IMR-90 (cell line): ENCODE measurements at regions of chr4 and their contacts with region 1.

Region 1: DNA sequence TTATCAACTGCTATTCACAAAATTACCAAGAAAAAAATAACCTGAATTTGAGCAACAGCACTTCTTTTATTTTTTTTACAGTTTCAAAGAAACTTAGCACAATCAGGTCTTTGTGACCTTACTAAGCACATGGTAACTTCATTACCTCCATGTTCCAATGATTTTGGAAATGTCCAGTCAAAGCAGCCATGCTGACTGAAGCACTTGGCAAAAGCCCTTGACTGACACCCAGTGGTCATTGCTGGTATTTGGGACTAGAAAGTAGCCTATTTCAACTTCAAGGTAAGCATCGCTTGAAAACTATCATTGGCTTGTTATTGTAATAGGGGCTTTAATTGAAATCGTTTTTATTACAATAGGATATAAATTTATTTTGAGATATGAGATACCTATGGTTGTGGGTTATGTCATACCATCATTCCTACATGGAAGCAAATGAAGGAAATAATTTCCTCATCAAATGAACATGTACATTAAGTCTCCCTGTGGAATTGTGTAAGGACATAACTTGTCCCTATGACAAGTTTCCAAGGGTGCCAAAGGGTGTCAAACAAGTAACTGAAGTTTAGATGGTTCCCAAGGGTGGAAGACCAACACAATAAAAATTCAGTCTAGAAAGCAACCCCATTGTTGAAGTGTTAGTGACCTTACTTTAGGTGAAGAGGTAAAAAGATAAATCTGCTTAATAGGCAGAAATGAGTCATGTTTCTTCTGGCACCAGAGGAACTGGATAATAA is 15.2 kb upstream of the ANXA10 start:
- DNase-seq: peak; percentile 71
- ATAC-seq: peak; percentile 81
- H3K4me3 ChIP-seq: no peak overlapping the region
- H3K27ac ChIP-seq: no peak overlapping the region
- H3K4me1 ChIP-seq: no peaks in the 10 kb centered on the region
- H3K27me3 ChIP-seq: no peaks in the 10 kb centered on the region
- CTCF ChIP-seq: peak; percentile 93
- POLR2A ChIP-seq: no peak
- RAD21 ChIP-seq: peak; percentile 93

Region 2: GRCh38 chr4:166165829-166166420 is 1911.2 kb before region 1 on chr4:
- CTCF ChIA-PET with region 1: no interaction called
- POLR2A ChIA-PET with region 1: no interaction called
- dilution Hi-C with region 1: no loop called
- in situ Hi-C with region 1: no loop called
- intact Hi-C with region 1: loop called (anchors 5 kb)
- DNase-seq: peak; percentile 68
- ATAC-seq: peak; percentile 86
- H3K4me3 ChIP-seq: no peak overlapping the region
- H3K27ac ChIP-seq: no peak overlapping the region
- H3K4me1 ChIP-seq: no peaks in the 10 kb centered on the region
- H3K27me3 ChIP-seq: no peaks in the 10 kb centered on the region
- CTCF ChIP-seq: peak; percentile 72
- POLR2A ChIP-seq: no peak
- RAD21 ChIP-seq: peak; percentile 77

Region 3: GRCh38 chr4:167622481-167623246 is 454.5 kb before region 1 on chr4:
- CTCF ChIA-PET with region 1: no interaction called
- POLR2A ChIA-PET with region 1: no interaction called
- dilution Hi-C with region 1: no loop called
- in situ Hi-C with region 1: no loop called
- intact Hi-C with region 1: loop called (anchors 1 kb)
- DNase-seq: peak; percentile 19
- ATAC-seq: peak; percentile 79
- H3K4me3 ChIP-seq: no peak overlapping the region
- H3K27ac ChIP-seq: no peak overlapping the region
- H3K4me1 ChIP-seq: no peaks in the 10 kb centered on the region
- H3K27me3 ChIP-seq: no peaks in the 10 kb centered on the region
- CTCF ChIP-seq: peak; percentile 57
- POLR2A ChIP-seq: no peak
- RAD21 ChIP-seq: peak; percentile 46

Region 4: GRCh38 chr4:167854881-167855280 is 222.3 kb before region 1 on chr4:
- CTCF ChIA-PET with region 1: no interaction called
- POLR2A ChIA-PET with region 1: no interaction called
- dilution Hi-C with region 1: no loop called
- in situ Hi-C with region 1: no loop called
- intact Hi-C with region 1: no loop called
- DNase-seq: no peak
- ATAC-seq: no peak
- H3K4me3 ChIP-seq: no peak overlapping the region
- H3K27ac ChIP-seq: no peak overlapping the region
- H3K4me1 ChIP-seq: no peaks in the 10 kb centered on the region
- H3K27me3 ChIP-seq: no peaks in the 10 kb centered on the region
- CTCF ChIP-seq: no peak
- POLR2A ChIP-seq: no peak
- RAD21 ChIP-seq: no peak